ENCODE measurements at regions of chr14 and their contacts with region 1.

Region 1: GRCh38 chr14:21092273-21093011 is 6.0 kb downstream of the ZNF219 start:
- DNase-seq: peak; percentile 98
- H3K4me3 ChIP-seq: peak overlapping the region in 1 of 8 donors; percentile 6
- H3K27ac ChIP-seq: peak overlapping the region in 6 of 8 donors; percentile 1 to 89 (median 54)
- H3K4me1 ChIP-seq: peaks cover 10 to 73% (median 35%) of the 10 kb centered on the region in 6 donors
- H3K27me3 ChIP-seq: peaks cover 0 to 4% (median 0%) of the 10 kb centered on the region in 7 donors
- CTCF ChIP-seq: peak; percentile 100
- POLR2A ChIP-seq: no peak

Region 2: GRCh38 chr14:20956376-20956976 is 136.0 kb before region 1 on chr14:
- intact Hi-C with region 1: no loop called
- DNase-seq: no peak
- H3K4me3 ChIP-seq: no peak overlapping the region
- H3K27ac ChIP-seq: peak overlapping the region in 2 of 8 donors; percentile 65 to 78
- H3K4me1 ChIP-seq: peaks cover 0 to 26% (median 2%) of the 10 kb centered on the region in 6 donors
- H3K27me3 ChIP-seq: peaks cover 0 to 14% (median 0%) of the 10 kb centered on the region in 7 donors
- CTCF ChIP-seq: no peak
- POLR2A ChIP-seq: no peak

Region 3: GRCh38 chr14:21014761-21015190 is 77.7 kb before region 1 on chr14:
- intact Hi-C with region 1: loop called (anchors 5 kb)
- DNase-seq: peak; percentile 87
- H3K4me3 ChIP-seq: no peak overlapping the region
- H3K27ac ChIP-seq: peak overlapping the region in 3 of 8 donors; percentile 19 to 35 (median 19)
- H3K4me1 ChIP-seq: peaks cover 9 to 53% (median 34%) of the 10 kb centered on the region in 6 donors
- H3K27me3 ChIP-seq: peaks cover 0 to 17% (median 0%) of the 10 kb centered on the region in 7 donors
- CTCF ChIP-seq: peak; percentile 73 to 95 (median 89)
- POLR2A ChIP-seq: no peak

Measured in spleen (tissue), 13 donors.